Activated CD4-positive, alpha-beta T cell treated with anti-CD3 and anti-CD28 coated beads for 36 hours (primary cell): ENCODE measurements at regions of chr3 and their contacts with region 1.

Region 1: GRCh38 chr3:194583604-194584318 is 49.5 kb downstream of the TMEM44 start:
- DNase-seq: peak; percentile 96
- ATAC-seq: peak; percentile 88
- H3K4me3 Mint-ChIP-seq: peak overlapping the region; percentile 93
- H3K27ac Mint-ChIP-seq: peak overlapping the region; percentile 97
- H3K4me1 Mint-ChIP-seq: peaks cover 25% of the 10 kb centered on the region
- H3K27me3 Mint-ChIP-seq: no peaks in the 10 kb centered on the region

Region 2: DNA sequence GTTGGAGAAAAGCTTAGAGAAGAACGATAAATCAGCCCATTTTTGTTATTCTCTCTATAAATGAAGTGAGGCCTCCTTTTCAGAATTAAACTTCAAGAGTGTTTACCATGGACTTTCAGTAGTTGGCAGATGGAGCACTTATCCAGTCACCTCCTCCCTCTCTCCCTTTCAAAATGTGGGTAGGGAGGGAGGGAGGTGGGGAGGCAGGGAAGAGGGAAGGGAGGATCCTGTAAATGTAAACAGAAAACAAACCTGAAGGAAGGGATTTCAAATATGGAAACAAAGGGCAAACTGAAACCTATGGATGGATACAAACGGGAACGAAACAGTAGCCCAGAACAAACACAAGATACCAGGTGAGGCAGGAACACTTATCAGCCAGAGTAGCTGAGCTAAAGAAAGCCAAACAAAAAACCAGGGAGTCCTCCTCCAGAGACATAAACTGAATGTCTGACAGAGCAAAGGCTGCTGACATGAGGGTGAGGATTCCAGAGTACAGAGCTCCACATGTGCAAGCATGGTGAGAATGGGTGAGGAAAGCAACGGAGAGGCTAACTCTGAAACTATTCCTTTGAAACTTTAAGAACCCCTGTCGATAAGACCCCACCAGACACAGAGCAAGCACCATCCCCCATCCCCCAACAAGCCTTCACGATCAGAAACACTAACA is 143.7 kb before region 1 on chr3:
- CTCF ChIA-PET with region 1: no interaction called
- POLR2A ChIA-PET with region 1: no interaction called
- intact Hi-C with region 1: no loop called
- DNase-seq: no peak
- ATAC-seq: no peak
- H3K4me3 Mint-ChIP-seq: no peak overlapping the region
- H3K27ac Mint-ChIP-seq: no peak overlapping the region
- H3K4me1 Mint-ChIP-seq: no peaks in the 10 kb centered on the region
- H3K27me3 Mint-ChIP-seq: no peaks in the 10 kb centered on the region

Region 3: DNA sequence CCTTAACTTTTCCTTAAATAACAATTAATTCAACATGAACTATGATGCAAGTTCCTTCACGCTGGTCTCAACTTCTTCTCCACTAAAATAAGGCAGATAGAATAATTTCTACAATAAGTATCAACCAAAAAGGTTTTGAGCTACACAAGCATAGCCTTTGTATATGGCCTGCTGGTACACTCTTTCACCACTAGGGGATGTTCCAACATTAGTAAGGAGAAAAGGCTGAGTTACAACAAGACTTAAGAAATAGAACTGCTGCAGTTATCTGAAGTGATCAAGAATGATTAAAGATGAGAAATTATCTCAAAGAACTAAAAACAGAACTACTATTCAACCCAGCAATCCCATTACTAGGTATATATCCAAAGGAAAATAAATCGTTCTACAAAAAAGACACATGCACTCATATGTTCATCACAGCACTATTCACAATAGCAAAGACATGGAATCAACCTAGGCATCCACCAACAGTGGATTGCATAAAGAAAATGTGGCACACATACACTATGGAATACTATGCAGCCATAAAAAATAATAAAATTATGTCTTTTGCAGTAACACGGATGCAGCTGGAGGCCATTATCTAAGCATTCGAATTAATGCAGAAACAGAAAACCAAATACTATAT is 111.4 kb before region 1 on chr3:
- CTCF ChIA-PET with region 1: interaction called, 34 read pairs
- POLR2A ChIA-PET with region 1: interaction called, 10 read pairs
- intact Hi-C with region 1: no loop called
- DNase-seq: no peak
- ATAC-seq: peak; percentile 88
- H3K4me3 Mint-ChIP-seq: no peak overlapping the region
- H3K27ac Mint-ChIP-seq: no peak overlapping the region
- H3K4me1 Mint-ChIP-seq: peaks cover 23% of the 10 kb centered on the region
- H3K27me3 Mint-ChIP-seq: no peaks in the 10 kb centered on the region

Region 4: DNA sequence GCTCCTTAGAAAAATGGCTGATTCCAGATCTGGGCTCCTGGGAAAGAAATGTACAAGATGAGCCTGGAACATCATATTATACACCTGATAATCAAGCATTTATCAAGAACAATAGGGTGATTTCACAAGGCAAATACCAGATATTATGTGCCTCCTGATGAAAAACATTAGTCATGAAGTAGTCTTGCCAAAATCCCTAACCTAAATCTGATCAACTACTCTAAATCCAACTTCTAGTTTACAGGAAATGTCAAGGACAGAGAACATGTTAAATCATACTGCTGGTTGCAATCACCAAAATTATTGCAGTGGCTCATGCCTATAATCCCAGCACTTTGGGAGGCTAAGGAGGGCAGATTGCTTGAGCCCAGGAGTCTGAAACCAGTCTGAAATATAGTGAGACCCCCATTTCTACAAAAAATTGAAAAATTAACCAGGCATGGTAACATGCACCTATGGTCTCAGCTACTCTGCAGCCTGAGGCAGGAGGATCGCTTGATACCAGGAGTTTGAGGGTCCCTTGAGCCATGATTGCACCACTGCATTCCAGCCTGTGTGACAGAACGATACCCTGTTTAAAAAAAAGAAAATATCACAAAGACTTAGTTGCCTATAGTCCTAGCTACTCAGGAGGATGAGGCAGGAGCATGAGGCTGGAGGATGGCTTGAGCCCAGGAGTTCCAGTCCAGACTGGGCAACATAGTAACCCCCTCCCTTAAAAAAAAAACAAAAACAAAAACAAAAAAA is 62.1 kb before region 1 on chr3:
- CTCF ChIA-PET with region 1: no interaction called
- POLR2A ChIA-PET with region 1: no interaction called
- intact Hi-C with region 1: loop called (anchors 1 to 2 kb)
- DNase-seq: no peak
- ATAC-seq: no peak
- H3K4me3 Mint-ChIP-seq: no peak overlapping the region
- H3K27ac Mint-ChIP-seq: no peak overlapping the region
- H3K4me1 Mint-ChIP-seq: peaks cover 37% of the 10 kb centered on the region
- H3K27me3 Mint-ChIP-seq: peaks cover 27% of the 10 kb centered on the region

Region 5: GRCh38 chr3:194632809-194633348 is 49.1 kb after region 1 on chr3:
- CTCF ChIA-PET with region 1: interaction called, 3 read pairs
- POLR2A ChIA-PET with region 1: no interaction called
- intact Hi-C with region 1: loop called in 1 of 2 experiments (anchors 1 kb)
- DNase-seq: peak; percentile 19
- ATAC-seq: peak; percentile 76
- H3K4me3 Mint-ChIP-seq: peak overlapping the region; percentile 74
- H3K27ac Mint-ChIP-seq: no peak overlapping the region
- H3K4me1 Mint-ChIP-seq: peaks cover 5% of the 10 kb centered on the region
- H3K27me3 Mint-ChIP-seq: no peaks in the 10 kb centered on the region

Region 6: GRCh38 chr3:195271116-195271858 is 687.5 kb after region 1 on chr3 and contains the start of gene XXYLT1:
- CTCF ChIA-PET with region 1: no interaction called
- POLR2A ChIA-PET with region 1: no interaction called
- intact Hi-C with region 1: no loop called
- DNase-seq: peak; percentile 96
- ATAC-seq: peak; percentile 86
- H3K4me3 Mint-ChIP-seq: peak within 1 kb of the TSS; percentile 84
- H3K27ac Mint-ChIP-seq: peak within 1 kb of the TSS; percentile 87
- H3K4me1 Mint-ChIP-seq: peaks cover 17% of the 10 kb centered on the region
- H3K27me3 Mint-ChIP-seq: no peaks in the 10 kb centered on the region
- total RNA-seq, gene XXYLT1: 5.4 to 5.7 TPM